Activated CD8-positive, alpha-beta memory T cell treated with anti-CD3 and anti-CD28 coated beads, Interleukin-2, amount 10 ng/mL, durations not matched to agents 7 days and 5 days (primary cell): ENCODE measurements at regions of chr10 and their contacts with region 1.

Region 1: GRCh38 chr10:101569838-101570766 is 18.0 kb downstream of the POLL start:
- DNase-seq: peak; percentile 83
- ATAC-seq: peak; percentile 88
- H3K4me3 Mint-ChIP-seq: peak overlapping the region; percentile 71
- H3K27ac Mint-ChIP-seq: no peak overlapping the region
- H3K4me1 Mint-ChIP-seq: peaks cover 17% of the 10 kb centered on the region
- H3K27me3 Mint-ChIP-seq: peaks cover 45% of the 10 kb centered on the region

Region 2: GRCh38 chr10:101272229-101272868 is 297.8 kb before region 1 on chr10:
- CTCF ChIA-PET with region 1: interaction called, 12 read pairs
- DNase-seq: peak; percentile 74
- ATAC-seq: peak; percentile 86
- H3K4me3 Mint-ChIP-seq: no peak overlapping the region
- H3K27ac Mint-ChIP-seq: no peak overlapping the region
- H3K4me1 Mint-ChIP-seq: peaks cover 2% of the 10 kb centered on the region
- H3K27me3 Mint-ChIP-seq: peaks cover 14% of the 10 kb centered on the region

Region 3: GRCh38 chr10:101291331-101292193 is 278.5 kb before region 1 on chr10:
- CTCF ChIA-PET with region 1: interaction called, 11 read pairs
- DNase-seq: peak; percentile 50
- ATAC-seq: no peak
- H3K4me3 Mint-ChIP-seq: no peak overlapping the region
- H3K27ac Mint-ChIP-seq: no peak overlapping the region
- H3K4me1 Mint-ChIP-seq: peaks cover 1% of the 10 kb centered on the region
- H3K27me3 Mint-ChIP-seq: peaks cover 81% of the 10 kb centered on the region

Region 4: GRCh38 chr10:101297901-101298486 is 272.1 kb before region 1 on chr10:
- CTCF ChIA-PET with region 1: interaction called, 11 read pairs
- DNase-seq: peak; percentile 78
- ATAC-seq: peak; percentile 86
- H3K4me3 Mint-ChIP-seq: no peak overlapping the region
- H3K27ac Mint-ChIP-seq: no peak overlapping the region
- H3K4me1 Mint-ChIP-seq: no peaks in the 10 kb centered on the region
- H3K27me3 Mint-ChIP-seq: peaks cover 66% of the 10 kb centered on the region

Region 5: GRCh38 chr10:101467286-101467770 is 102.8 kb before region 1 on chr10:
- CTCF ChIA-PET with region 1: interaction called, 13 read pairs
- DNase-seq: peak; percentile 50
- ATAC-seq: peak; percentile 87
- H3K4me3 Mint-ChIP-seq: no peak overlapping the region
- H3K27ac Mint-ChIP-seq: no peak overlapping the region
- H3K4me1 Mint-ChIP-seq: peaks cover 6% of the 10 kb centered on the region
- H3K27me3 Mint-ChIP-seq: no peaks in the 10 kb centered on the region

Region 6: GRCh38 chr10:101580486-101581399 is 10.6 kb after region 1 on chr10:
- CTCF ChIA-PET with region 1: interaction called, 19 read pairs
- DNase-seq: no peak
- ATAC-seq: no peak
- H3K4me3 Mint-ChIP-seq: no peak overlapping the region
- H3K27ac Mint-ChIP-seq: no peak overlapping the region
- H3K4me1 Mint-ChIP-seq: peaks cover 3% of the 10 kb centered on the region
- H3K27me3 Mint-ChIP-seq: no peaks in the 10 kb centered on the region